Right ventricle myocardium inferior (tissue), 1 donor: ENCODE measurements at regions of chr19 and their contacts with region 1.

Region 1: GRCh38 chr19:13430790-13431582 is 75.3 kb downstream of the CACNA1A start:
- DNase-seq: no peak
- ATAC-seq: peak; percentile 31

Region 2: GRCh38 chr19:13117772-13118423 is 313.1 kb before region 1 on chr19 and contains the start of gene NACC1:
- intact Hi-C with region 1: loop called (anchors 10 kb)
- DNase-seq: peak; percentile 95
- ATAC-seq: peak; percentile 95
- total RNA-seq, gene NACC1: 54.0 TPM